Natural killer cell (primary cell): ENCODE measurements at regions of chr5 and their contacts with region 1.

Region 1: DNA sequence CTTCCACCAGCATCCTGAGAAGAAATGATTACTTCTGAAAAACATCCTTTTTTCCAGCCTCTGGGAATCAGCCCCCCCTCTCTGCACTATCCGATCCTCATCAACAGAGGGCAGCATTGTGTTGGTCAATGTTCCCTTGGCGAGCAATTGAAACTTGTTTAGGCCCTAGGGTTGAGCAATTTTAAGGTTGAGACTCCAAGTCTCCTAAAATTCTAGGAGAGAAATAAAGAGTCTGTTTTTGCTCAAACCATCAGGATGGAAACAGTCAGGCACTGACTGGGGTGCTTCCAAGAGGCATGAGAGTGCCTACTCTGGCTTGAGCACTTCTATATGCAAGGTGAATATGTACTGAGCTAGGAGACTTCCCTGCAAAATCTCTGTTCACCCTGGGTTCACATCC is 12.4 kb upstream of the CYFIP2 start:
- DNase-seq: peak in 1 of 2 donors; percentile 68
- ATAC-seq: peak; percentile 19 to 54 (median 30)
- H3K4me3 ChIP-seq: no peak overlapping the region
- H3K4me3 Mint-ChIP-seq: peak overlapping the region; percentile 81
- H3K27ac ChIP-seq: peak overlapping the region; percentile 88
- H3K27ac Mint-ChIP-seq: peak overlapping the region; percentile 92 to 97
- H3K4me1 ChIP-seq: peaks cover 55% of the 10 kb centered on the region
- H3K4me1 Mint-ChIP-seq: peaks cover 90% of the 10 kb centered on the region in 2 donors
- H3K27me3 ChIP-seq: no peaks in the 10 kb centered on the region
- H3K27me3 Mint-ChIP-seq: no peaks in the 10 kb centered on the region
- CTCF ChIP-seq: peak; percentile 63

Region 2: DNA sequence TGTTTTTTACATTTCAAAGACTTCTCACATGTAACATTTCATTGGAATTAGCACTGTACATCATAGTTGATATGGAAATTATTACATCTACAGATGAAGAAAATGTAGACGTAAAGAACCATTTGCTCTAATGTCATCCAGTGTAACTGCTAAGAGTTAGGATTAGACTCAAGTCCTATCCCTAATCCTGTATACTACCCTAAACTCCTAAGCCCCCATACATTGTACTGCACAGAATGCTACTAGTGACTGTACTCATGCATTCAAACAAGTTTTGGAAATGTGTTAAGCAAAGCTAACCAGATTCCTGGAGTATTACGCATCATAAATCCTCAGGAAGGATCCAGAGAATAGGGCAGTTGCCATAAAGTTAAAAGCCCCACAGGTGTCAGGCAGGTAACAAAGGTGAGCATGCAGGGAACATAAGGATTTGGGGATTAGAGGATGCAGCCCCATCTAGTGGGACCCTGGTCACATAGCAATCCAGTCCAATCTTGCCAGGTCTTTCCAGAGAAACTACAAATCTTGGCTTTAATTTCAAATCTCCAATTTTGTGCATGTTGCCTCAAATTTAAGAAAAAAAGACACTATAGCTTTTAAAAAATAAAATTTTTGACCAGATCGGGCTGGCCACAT is 226.6 kb before region 1 on chr5:
- intact Hi-C with region 1: loop called (anchors 5 kb)
- DNase-seq: peak in 1 of 2 donors; percentile 36
- ATAC-seq: no peak
- H3K4me3 ChIP-seq: no peak overlapping the region
- H3K4me3 Mint-ChIP-seq: no peak overlapping the region
- H3K27ac ChIP-seq: peak overlapping the region; percentile 46
- H3K27ac Mint-ChIP-seq: peak overlapping the region; percentile 90 to 91
- H3K4me1 ChIP-seq: peaks cover 70% of the 10 kb centered on the region
- H3K4me1 Mint-ChIP-seq: peaks cover 78 to 89% of the 10 kb centered on the region in 2 donors
- H3K27me3 ChIP-seq: no peaks in the 10 kb centered on the region
- H3K27me3 Mint-ChIP-seq: no peaks in the 10 kb centered on the region
- CTCF ChIP-seq: no peak

Region 3: GRCh38 chr5:157180374-157181264 is 72.9 kb before region 1 on chr5 and contains the start of gene ITK:
- intact Hi-C with region 1: loop called (anchors 2 kb)
- DNase-seq: peak; percentile 27 to 88
- ATAC-seq: peak; percentile 84 to 94 (median 86)
- H3K4me3 ChIP-seq: peak within 1 kb of the TSS; percentile 61
- H3K4me3 Mint-ChIP-seq: peak within 1 kb of the TSS; percentile 99
- H3K27ac ChIP-seq: peak within 1 kb of the TSS; percentile 91
- H3K27ac Mint-ChIP-seq: peak within 1 kb of the TSS; percentile 96 to 97
- H3K4me1 ChIP-seq: peaks cover 21% of the 10 kb centered on the region
- H3K4me1 Mint-ChIP-seq: peaks cover 62 to 71% of the 10 kb centered on the region in 2 donors
- H3K27me3 ChIP-seq: no peaks in the 10 kb centered on the region
- H3K27me3 Mint-ChIP-seq: no peaks in the 10 kb centered on the region
- CTCF ChIP-seq: no peak
- total RNA-seq, gene ITK: 153 to 188 (median 186) TPM

Region 4: GRCh38 chr5:157214861-157215513 is 38.6 kb before region 1 on chr5:
- intact Hi-C with region 1: loop called (anchors 2 kb)
- DNase-seq: peak in 1 of 2 donors; percentile 81
- ATAC-seq: peak; percentile 59 to 78 (median 66)
- H3K4me3 ChIP-seq: no peak overlapping the region
- H3K4me3 Mint-ChIP-seq: peak overlapping the region; percentile 89
- H3K27ac ChIP-seq: peak overlapping the region; percentile 73
- H3K27ac Mint-ChIP-seq: peak overlapping the region; percentile 86 to 92
- H3K4me1 ChIP-seq: peaks cover 76% of the 10 kb centered on the region
- H3K4me1 Mint-ChIP-seq: peaks cover 81 to 87% of the 10 kb centered on the region in 2 donors
- H3K27me3 ChIP-seq: no peaks in the 10 kb centered on the region
- H3K27me3 Mint-ChIP-seq: no peaks in the 10 kb centered on the region
- CTCF ChIP-seq: no peak

Region 5: GRCh38 chr5:157271740-157272271 is 18.3 kb after region 1 on chr5:
- intact Hi-C with region 1: loop called (anchors 2 kb)
- DNase-seq: peak; percentile 80 to 95
- ATAC-seq: peak; percentile 81 to 91 (median 91)
- H3K4me3 ChIP-seq: no peak overlapping the region
- H3K4me3 Mint-ChIP-seq: peak overlapping the region; percentile 89
- H3K27ac ChIP-seq: peak overlapping the region; percentile 86
- H3K27ac Mint-ChIP-seq: peak overlapping the region; percentile 93 to 99
- H3K4me1 ChIP-seq: peaks cover 73% of the 10 kb centered on the region
- H3K4me1 Mint-ChIP-seq: peaks cover 95 to 96% of the 10 kb centered on the region in 2 donors
- H3K27me3 ChIP-seq: no peaks in the 10 kb centered on the region
- H3K27me3 Mint-ChIP-seq: no peaks in the 10 kb centered on the region
- CTCF ChIP-seq: no peak

Region 6: GRCh38 chr5:157312492-157312891 is 58.9 kb after region 1 on chr5:
- intact Hi-C with region 1: loop called (anchors 1 kb)
- DNase-seq: peak; percentile 50 to 88
- ATAC-seq: peak; percentile 88 to 98 (median 90)
- H3K4me3 ChIP-seq: no peak overlapping the region
- H3K4me3 Mint-ChIP-seq: no peak overlapping the region
- H3K27ac ChIP-seq: peak overlapping the region; percentile 27
- H3K27ac Mint-ChIP-seq: peak overlapping the region; percentile 81 to 90
- H3K4me1 ChIP-seq: peaks cover 29% of the 10 kb centered on the region
- H3K4me1 Mint-ChIP-seq: peaks cover 16 to 25% of the 10 kb centered on the region in 2 donors
- H3K27me3 ChIP-seq: no peaks in the 10 kb centered on the region
- H3K27me3 Mint-ChIP-seq: no peaks in the 10 kb centered on the region
- CTCF ChIP-seq: peak; percentile 74